ENCODE measurements at regions of chr1 and their contacts with region 1.

Region 1: GRCh38 chr1:219405531-219406331 is 207.2 kb downstream of the ZC3H11B start:
- DNase-seq: peak; percentile 89
- H3K4me3 ChIP-seq: no peak overlapping the region
- H3K27ac ChIP-seq: no peak overlapping the region
- H3K4me1 ChIP-seq: peaks cover 22% of the 10 kb centered on the region
- H3K27me3 ChIP-seq: peaks cover 79% of the 10 kb centered on the region
- CTCF ChIP-seq: no peak

Region 2: GRCh38 chr1:218501161-218501560 is 904.6 kb before region 1 on chr1:
- CTCF ChIA-PET with region 1: interaction called, 11 read pairs
- POLR2A ChIA-PET with region 1: no interaction called
- intact Hi-C with region 1: no loop called
- DNase-seq: no peak
- H3K4me3 ChIP-seq: no peak overlapping the region
- H3K27ac ChIP-seq: no peak overlapping the region
- H3K4me1 ChIP-seq: peaks cover 10% of the 10 kb centered on the region
- H3K27me3 ChIP-seq: no peaks in the 10 kb centered on the region
- CTCF ChIP-seq: no peak

Region 3: DNA sequence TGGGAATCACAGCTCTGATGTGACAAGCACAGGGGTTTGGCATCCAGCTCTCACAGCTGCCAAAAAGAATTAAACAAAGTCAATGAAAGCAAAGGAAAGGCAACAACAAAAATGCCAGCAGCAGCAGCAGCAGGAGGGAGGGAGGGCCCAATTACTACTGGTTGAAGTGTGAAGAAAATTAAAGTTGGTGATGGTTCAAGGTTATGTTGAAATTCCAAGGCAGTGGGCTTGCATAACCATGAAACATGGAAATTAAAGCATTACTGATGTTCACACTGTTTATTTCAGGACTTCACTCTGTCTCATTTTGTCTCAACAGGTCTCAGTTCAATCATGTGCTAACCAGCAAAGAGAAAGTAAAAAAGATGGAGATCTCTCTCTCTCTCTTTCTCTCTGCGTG is 452.3 kb before region 1 on chr1:
- CTCF ChIA-PET with region 1: no interaction called
- POLR2A ChIA-PET with region 1: no interaction called
- intact Hi-C with region 1: no loop called
- DNase-seq: peak; percentile 5
- H3K4me3 ChIP-seq: no peak overlapping the region
- H3K27ac ChIP-seq: no peak overlapping the region
- H3K4me1 ChIP-seq: no peaks in the 10 kb centered on the region
- H3K27me3 ChIP-seq: peaks cover 14% of the 10 kb centered on the region
- CTCF ChIP-seq: no peak

Region 4: GRCh38 chr1:219279017-219279770 is 126.5 kb before region 1 on chr1:
- CTCF ChIA-PET with region 1: no interaction called
- POLR2A ChIA-PET with region 1: no interaction called
- intact Hi-C with region 1: loop called (anchors 5 kb)
- DNase-seq: no peak
- H3K4me3 ChIP-seq: no peak overlapping the region
- H3K27ac ChIP-seq: no peak overlapping the region
- H3K4me1 ChIP-seq: peaks cover 24% of the 10 kb centered on the region
- H3K27me3 ChIP-seq: peaks cover 13% of the 10 kb centered on the region
- CTCF ChIP-seq: no peak

Region 5: GRCh38 chr1:220217383-220217988 is 811.8 kb after region 1 on chr1:
- CTCF ChIA-PET with region 1: no interaction called
- POLR2A ChIA-PET with region 1: no interaction called
- intact Hi-C with region 1: no loop called
- DNase-seq: peak; percentile 18
- H3K4me3 ChIP-seq: no peak overlapping the region
- H3K27ac ChIP-seq: no peak overlapping the region
- H3K4me1 ChIP-seq: no peaks in the 10 kb centered on the region
- H3K27me3 ChIP-seq: no peaks in the 10 kb centered on the region
- CTCF ChIP-seq: peak; percentile 61

Measured in A673 (cell line).